Astrocyte of the cerebellum (primary cell): ENCODE measurements at regions of chr1 and their contacts with region 1.

Region 1: GRCh38 chr1:164559342-164560051 is 513 bp downstream of the PBX1 start:
- DNase-seq: peak; percentile 40
- H3K4me3 ChIP-seq: peak overlapping the region; percentile 66
- CTCF ChIP-seq: no peak

Region 2: GRCh38 chr1:164598701-164599100 is 39.2 kb after region 1 on chr1:
- in situ Hi-C with region 1: loop called (anchors 5 kb)
- DNase-seq: no peak
- H3K4me3 ChIP-seq: no peak overlapping the region
- CTCF ChIP-seq: no peak

Region 3: GRCh38 chr1:164765557-164765956 is 206.1 kb after region 1 on chr1:
- in situ Hi-C with region 1: loop called (anchors 10 kb)
- DNase-seq: no peak
- H3K4me3 ChIP-seq: no peak overlapping the region
- CTCF ChIP-seq: no peak